Common myeloid progenitor, CD34-positive (primary cell): ENCODE measurements at regions of chr6 and their contacts with region 1.

Region 1: GRCh38 chr6:110528101-110528929 is 51.9 kb upstream of the SLC22A16 start:
- DNase-seq: peak; percentile 67 to 88 (median 82)
- H3K4me3 ChIP-seq: no peak overlapping the region
- H3K27ac ChIP-seq: peak overlapping the region in 1 of 2 experiments; percentile 70
- H3K4me1 ChIP-seq: peaks cover 10 to 22% (median 17%) of the 10 kb centered on the region in 4 experiments
- H3K27me3 ChIP-seq: no peaks in the 10 kb centered on the region

Region 2: DNA sequence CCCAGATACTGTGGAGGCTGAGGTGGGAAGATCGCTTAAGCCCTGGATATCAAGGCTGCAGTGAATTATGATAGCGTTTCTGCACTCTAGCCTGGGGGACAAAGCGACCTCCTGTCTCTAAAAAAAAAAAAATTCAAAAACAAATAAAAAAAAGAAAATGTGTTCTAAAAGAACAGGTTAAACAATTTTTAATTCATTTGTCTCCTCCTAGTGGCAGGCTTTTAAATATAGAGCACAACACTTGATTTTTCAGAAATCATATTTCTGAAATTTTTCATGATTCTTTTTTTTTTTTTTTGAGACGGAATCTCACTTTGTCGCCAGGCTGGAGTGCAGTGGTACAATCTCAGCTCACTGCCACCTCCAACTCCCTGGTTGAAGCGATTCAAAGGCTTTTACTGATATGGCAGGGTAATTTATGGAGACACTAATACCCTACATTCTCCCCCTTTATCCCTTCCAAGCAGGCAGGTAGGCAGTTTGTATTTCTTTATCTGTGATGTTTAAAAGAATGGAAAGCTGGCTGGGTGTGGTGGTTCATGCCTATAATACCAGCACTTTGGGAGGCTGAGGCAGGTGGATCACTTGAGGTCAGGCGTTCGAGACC is 421.5 kb after region 1 on chr6:
- CTCF ChIA-PET with region 1: interaction called, 15 read pairs
- POLR2A ChIA-PET with region 1: no interaction called
- DNase-seq: peak; percentile 75 to 85 (median 83)
- H3K4me3 ChIP-seq: peak overlapping the region in 3 of 7 experiments; percentile 27 to 64 (median 40)
- H3K27ac ChIP-seq: peak overlapping the region in 1 of 2 experiments; percentile 61
- H3K4me1 ChIP-seq: peaks cover 0 to 42% (median 20%) of the 10 kb centered on the region in 4 experiments
- H3K27me3 ChIP-seq: no peaks in the 10 kb centered on the region

Region 3: DNA sequence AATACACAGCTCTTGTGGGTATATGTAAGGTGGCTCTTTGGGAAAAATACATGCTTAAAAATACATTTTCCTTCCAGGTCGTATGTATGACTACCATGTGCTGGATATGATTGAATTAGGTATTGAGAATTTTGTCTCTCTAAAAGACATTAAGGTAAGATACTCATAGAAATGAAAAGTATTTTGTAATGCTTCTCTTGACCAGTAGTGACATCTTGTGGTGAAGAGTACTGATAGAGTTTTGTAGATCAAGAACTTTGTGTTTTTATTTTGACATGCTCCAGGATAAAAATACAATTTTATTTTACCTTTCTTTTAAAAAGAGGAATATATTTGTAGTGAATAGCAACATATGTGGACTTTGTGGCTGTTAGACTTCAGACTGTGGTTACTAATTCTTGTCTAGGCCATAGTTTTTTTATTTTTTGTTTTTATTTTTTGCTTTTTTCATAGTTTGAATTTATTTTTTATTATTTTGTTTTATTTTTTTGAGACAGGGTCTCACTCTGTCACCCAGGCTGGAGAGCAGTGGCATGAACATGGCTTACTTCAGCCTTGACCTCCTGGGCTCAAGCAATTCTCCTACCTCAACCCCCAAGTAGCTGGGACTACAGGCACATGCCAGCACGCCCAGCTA is 471.4 kb after region 1 on chr6:
- CTCF ChIA-PET with region 1: interaction called, 32 read pairs
- POLR2A ChIA-PET with region 1: no interaction called
- DNase-seq: peak; percentile 57 to 79 (median 77)
- H3K4me3 ChIP-seq: no peak overlapping the region
- H3K27ac ChIP-seq: no peak overlapping the region
- H3K4me1 ChIP-seq: no peaks in the 10 kb centered on the region
- H3K27me3 ChIP-seq: no peaks in the 10 kb centered on the region